Activated CD4-positive, alpha-beta T cell treated with anti-CD3 and anti-CD28 coated beads, Interleukin-2, amount 10 ng/mL, durations not matched to agents 7 days and 5 days (primary cell): ENCODE measurements at regions of chr14 and their contacts with region 1.

Region 1: DNA sequence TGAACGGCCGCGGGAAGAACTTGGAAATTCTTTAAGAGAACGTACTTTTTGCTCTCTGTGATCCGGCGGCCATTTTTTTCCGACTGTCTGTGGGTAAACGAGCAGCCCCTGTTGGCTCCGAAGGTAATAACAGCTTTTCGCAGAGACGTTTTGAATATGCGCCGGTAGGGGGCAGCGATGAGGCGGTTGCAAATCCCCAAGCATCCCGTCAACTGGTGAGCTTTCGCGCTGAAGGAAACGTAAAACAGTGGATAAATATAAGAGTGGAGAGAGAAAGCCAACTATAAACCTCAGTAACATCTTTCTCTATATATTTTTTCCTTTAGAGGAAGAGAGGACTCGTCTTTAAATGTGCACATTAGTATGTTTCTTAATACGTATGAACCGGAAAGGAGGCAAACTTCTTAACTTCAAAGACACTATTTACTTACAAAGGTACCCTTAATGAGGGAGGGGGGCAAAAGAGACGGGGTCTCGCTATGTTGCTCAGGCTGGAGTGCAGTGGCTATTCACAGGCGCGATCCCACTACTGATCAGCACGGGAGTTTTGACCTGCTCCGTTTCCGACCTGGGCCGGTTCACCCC is 9.6 kb upstream of the NEMF start:
- DNase-seq: peak; percentile 88
- H3K4me3 Mint-ChIP-seq: no peak overlapping the region
- H3K27ac Mint-ChIP-seq: no peak overlapping the region
- H3K4me1 Mint-ChIP-seq: peaks cover 27% of the 10 kb centered on the region
- H3K27me3 Mint-ChIP-seq: no peaks in the 10 kb centered on the region

Region 2: DNA sequence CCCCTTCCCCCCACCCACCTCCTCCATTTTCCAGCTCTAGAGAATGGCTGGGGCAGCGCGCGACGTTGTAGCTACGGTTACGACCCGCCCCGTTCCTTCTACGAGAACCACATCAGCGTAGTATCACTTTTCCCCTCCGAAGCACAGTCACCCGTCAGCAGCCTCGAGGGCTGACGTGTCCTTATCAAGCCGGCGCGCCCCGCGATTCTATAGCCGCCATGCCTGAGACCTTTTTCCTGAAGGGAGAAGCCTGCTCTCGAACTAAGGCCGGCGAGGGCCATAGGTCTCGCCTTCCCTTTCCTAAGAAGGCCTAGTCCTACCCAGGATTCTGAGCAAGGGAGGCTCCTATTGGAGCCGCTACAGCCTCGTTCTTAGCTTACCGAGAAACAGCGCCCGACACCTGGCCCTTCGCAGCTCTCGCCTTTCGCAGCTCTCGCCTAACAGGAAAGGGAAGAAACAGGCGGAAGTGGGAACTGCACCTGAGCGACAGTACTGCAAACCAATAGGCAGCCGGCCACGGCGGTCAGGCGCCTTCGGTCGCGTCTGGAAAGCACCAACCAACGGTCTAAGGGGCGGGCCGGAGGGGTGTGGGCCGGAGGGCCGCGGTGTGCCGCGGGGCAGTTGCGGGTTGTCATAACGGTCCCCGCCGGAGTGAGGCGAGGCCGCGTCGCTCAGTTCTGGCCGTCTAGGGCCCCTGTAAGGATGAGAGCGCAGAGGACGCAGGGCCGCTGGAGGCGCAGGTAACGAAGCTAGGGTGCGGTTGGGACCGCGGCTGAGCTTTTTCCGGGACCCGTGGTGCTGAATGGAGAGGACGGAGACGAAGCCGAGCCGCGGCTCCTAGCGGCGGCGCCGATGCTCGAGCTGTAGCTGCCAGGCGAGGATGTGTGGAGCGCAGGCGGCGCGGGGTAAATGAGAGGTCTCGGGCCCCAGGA is 241.7 kb before region 1 on chr14 and contains the starts of genes MGAT2 and RPL36AL:
- CTCF ChIA-PET with region 1: interaction called, 12 read pairs
- POLR2A ChIA-PET with region 1: no interaction called
- DNase-seq: peak; percentile 96
- H3K4me3 Mint-ChIP-seq: peak within 1 kb of the TSS; percentile 97
- H3K27ac Mint-ChIP-seq: peak within 1 kb of the TSS; percentile 97
- H3K4me1 Mint-ChIP-seq: peaks cover 50% of the 10 kb centered on the region
- H3K27me3 Mint-ChIP-seq: no peaks in the 10 kb centered on the region
- total RNA-seq, gene MGAT2: 53.1 to 57.3 TPM
- total RNA-seq, gene RPL36AL: 249 to 262 TPM

Region 3: DNA sequence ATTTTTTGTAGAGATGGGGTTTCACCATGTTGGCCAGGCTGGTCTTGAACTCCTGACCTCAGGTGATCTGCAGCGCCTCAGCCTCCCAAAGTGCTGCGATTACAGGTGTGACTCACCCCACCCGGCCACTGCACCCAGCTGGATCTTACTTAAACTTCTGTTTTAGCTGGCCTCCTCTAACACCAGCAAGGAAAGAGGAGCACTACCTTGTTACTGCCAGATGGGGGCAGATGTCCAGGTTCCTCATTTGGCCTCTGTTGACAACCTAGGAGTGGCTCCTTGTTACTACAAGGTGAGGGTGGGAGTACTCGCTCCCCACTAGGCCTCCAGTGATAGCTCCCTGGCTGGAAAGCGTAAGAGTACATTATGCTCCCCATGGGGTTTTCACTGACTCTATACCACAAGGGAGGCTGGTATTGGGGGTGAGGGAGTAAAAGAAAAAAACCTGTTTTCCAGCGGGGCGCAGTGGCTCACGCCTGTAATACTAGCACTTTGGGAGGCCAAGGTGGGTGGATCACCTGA is 17.6 kb after region 1 on chr14:
- CTCF ChIA-PET with region 1: interaction called, 26 read pairs
- POLR2A ChIA-PET with region 1: interaction called, 11 read pairs
- DNase-seq: peak; percentile 63
- H3K4me3 Mint-ChIP-seq: no peak overlapping the region
- H3K27ac Mint-ChIP-seq: peak overlapping the region; percentile 71
- H3K4me1 Mint-ChIP-seq: peaks cover 30% of the 10 kb centered on the region
- H3K27me3 Mint-ChIP-seq: peaks cover 4% of the 10 kb centered on the region

Region 4: GRCh38 chr14:49986340-49987014 is 124.3 kb after region 1 on chr14:
- CTCF ChIA-PET with region 1: interaction called, 10 read pairs
- POLR2A ChIA-PET with region 1: no interaction called
- DNase-seq: no peak
- H3K4me3 Mint-ChIP-seq: no peak overlapping the region
- H3K27ac Mint-ChIP-seq: no peak overlapping the region
- H3K4me1 Mint-ChIP-seq: peaks cover 28% of the 10 kb centered on the region
- H3K27me3 Mint-ChIP-seq: no peaks in the 10 kb centered on the region

Region 5: GRCh38 chr14:50045039-50045711 is 183.0 kb after region 1 on chr14:
- CTCF ChIA-PET with region 1: interaction called, 30 read pairs
- POLR2A ChIA-PET with region 1: no interaction called
- DNase-seq: peak; percentile 84
- H3K4me3 Mint-ChIP-seq: peak overlapping the region; percentile 4
- H3K27ac Mint-ChIP-seq: peak overlapping the region; percentile 90
- H3K4me1 Mint-ChIP-seq: peaks cover 77% of the 10 kb centered on the region
- H3K27me3 Mint-ChIP-seq: no peaks in the 10 kb centered on the region

Region 6: DNA sequence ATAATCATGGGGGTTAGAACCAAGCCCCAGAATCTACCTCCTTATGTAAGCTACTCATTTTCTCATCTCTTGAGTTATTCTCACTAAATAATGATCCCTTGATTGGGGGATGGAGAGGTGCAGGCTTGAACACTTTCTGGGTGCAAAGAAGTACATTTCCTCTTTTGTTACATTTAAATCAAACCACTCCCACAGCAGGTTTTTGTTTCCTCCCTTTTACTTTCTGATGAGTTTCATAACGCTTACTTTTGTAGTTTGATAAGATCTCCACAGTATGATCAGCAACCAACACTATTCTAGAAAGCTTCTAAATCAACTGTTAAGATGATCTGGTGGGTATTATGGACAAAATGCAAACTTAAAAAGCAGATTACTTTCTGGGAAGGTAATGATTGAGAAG is 233.7 kb after region 1 on chr14:
- CTCF ChIA-PET with region 1: interaction called, 130 read pairs
- POLR2A ChIA-PET with region 1: no interaction called
- DNase-seq: peak; percentile 37
- H3K4me3 Mint-ChIP-seq: peak overlapping the region; percentile 65
- H3K27ac Mint-ChIP-seq: peak overlapping the region; percentile 94
- H3K4me1 Mint-ChIP-seq: peaks cover 82% of the 10 kb centered on the region
- H3K27me3 Mint-ChIP-seq: no peaks in the 10 kb centered on the region